Colonic mucosa (tissue), 4 donors: ENCODE measurements at regions of chr18 and their contacts with region 1.

Region 1: DNA sequence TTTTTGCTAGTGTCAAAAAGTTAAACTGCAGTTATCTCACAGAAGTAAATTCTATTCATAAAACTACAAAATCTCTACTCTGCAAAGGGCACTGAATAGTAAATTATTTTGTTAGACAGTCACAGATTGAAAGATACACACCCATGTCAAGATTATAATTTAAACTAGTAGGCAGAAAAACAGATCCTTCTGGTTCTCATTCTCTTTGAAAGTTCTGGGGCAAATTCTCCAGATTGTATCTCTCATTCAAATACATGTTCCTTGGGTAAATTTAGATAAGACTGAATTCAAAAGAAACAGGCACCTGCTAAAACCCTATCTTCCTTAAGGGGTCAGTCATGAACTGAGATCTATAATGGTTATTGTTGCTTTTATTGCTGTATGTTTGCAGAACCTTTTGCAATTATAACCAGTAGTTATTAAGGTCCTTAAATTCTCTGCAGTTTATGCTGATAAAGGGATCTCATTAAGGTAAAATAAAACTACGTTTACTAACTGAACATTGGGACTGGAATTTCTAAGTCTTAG is 83.6 kb downstream of the MYO5B start:
- DNase-seq: no peak
- H3K4me3 ChIP-seq: no peak overlapping the region
- H3K27ac ChIP-seq: no peak overlapping the region
- H3K4me1 ChIP-seq: no peaks in the 10 kb centered on the region
- H3K27me3 ChIP-seq: no peaks in the 10 kb centered on the region
- CTCF ChIP-seq: peak; percentile 32

Region 2: GRCh38 chr18:50071397-50071796 is 39.9 kb before region 1 on chr18:
- intact Hi-C with region 1: loop called (anchors 5 kb)
- DNase-seq: no peak
- H3K4me3 ChIP-seq: no peak overlapping the region
- H3K27ac ChIP-seq: no peak overlapping the region
- H3K4me1 ChIP-seq: peaks cover 5% of the 10 kb centered on the region
- H3K27me3 ChIP-seq: no peaks in the 10 kb centered on the region
- CTCF ChIP-seq: no peak

Region 3: GRCh38 chr18:50194631-50195532 is 83.6 kb after region 1 on chr18 and contains the start of gene MYO5B:
- intact Hi-C with region 1: loop called (anchors 5 kb)
- DNase-seq: peak; percentile 85
- H3K4me3 ChIP-seq: peak within 1 kb of the TSS; percentile 55
- H3K27ac ChIP-seq: peak within 1 kb of the TSS; percentile 74
- H3K4me1 ChIP-seq: no peaks in the 10 kb centered on the region
- H3K27me3 ChIP-seq: peaks cover 12% of the 10 kb centered on the region
- CTCF ChIP-seq: peak; percentile 29
- total RNA-seq, gene MYO5B: 106 to 132 TPM

Region 4: DNA sequence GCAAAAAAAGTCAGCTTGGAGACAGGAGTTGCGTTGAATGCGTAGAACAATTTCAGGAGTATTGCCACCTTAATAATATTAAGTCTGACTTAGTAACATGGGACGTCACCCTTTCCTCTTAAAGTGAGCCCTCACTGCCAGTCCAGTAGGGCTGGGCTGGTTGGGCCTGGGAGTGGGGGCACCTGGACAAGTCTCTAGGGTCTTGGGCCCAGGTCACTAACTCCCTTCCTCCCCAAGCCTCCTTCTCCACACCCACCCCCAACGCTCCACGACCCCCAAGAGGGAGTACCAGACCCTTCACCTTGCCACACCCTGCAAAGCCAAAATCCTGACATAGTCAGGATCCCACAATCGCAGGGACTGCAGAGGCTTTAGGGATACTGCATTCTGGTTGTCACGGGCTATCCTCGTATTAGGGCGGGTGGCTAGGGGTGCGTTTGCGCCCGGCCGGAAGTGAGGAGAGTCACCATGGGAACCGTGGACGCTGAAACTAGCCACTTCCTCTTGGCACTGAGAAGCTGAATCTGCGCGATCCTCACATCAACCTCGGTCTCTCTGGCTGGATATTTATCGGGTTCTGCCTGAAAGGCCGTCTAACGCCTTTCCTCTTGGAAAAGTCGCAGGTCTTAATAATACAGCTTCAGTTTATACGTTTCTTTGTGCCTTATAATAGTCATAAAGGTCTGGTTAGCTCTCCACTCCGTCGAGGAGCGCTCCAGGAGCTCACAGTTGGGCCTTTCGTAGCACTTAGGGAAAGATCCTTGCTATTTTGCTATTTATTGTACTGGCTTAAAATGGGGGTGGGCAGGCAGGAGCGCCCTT is 186.5 kb after region 1 on chr18:
- intact Hi-C with region 1: no loop called
- DNase-seq: peak; percentile 77
- H3K4me3 ChIP-seq: peak overlapping the region; percentile 40
- H3K27ac ChIP-seq: no peak overlapping the region
- H3K4me1 ChIP-seq: no peaks in the 10 kb centered on the region
- H3K27me3 ChIP-seq: peaks cover 3% of the 10 kb centered on the region
- CTCF ChIP-seq: no peak